B cell (primary cell): ENCODE measurements at regions of chr7 and their contacts with region 1.

Region 1: GRCh38 chr7:30074422-30075030 is 46.3 kb downstream of the PLEKHA8 start:
- DNase-seq: peak; percentile 34
- ATAC-seq: no peak
- H3K4me3 ChIP-seq: no peak overlapping the region
- H3K4me3 Mint-ChIP-seq: no peak overlapping the region
- H3K27ac ChIP-seq: no peak overlapping the region
- H3K27ac Mint-ChIP-seq: no peak overlapping the region
- H3K4me1 ChIP-seq: no peaks in the 10 kb centered on the region
- H3K4me1 Mint-ChIP-seq: no peaks in the 10 kb centered on the region
- H3K27me3 ChIP-seq: no peaks in the 10 kb centered on the region
- H3K27me3 Mint-ChIP-seq: no peaks in the 10 kb centered on the region
- CTCF ChIP-seq: peak; percentile 64

Region 2: DNA sequence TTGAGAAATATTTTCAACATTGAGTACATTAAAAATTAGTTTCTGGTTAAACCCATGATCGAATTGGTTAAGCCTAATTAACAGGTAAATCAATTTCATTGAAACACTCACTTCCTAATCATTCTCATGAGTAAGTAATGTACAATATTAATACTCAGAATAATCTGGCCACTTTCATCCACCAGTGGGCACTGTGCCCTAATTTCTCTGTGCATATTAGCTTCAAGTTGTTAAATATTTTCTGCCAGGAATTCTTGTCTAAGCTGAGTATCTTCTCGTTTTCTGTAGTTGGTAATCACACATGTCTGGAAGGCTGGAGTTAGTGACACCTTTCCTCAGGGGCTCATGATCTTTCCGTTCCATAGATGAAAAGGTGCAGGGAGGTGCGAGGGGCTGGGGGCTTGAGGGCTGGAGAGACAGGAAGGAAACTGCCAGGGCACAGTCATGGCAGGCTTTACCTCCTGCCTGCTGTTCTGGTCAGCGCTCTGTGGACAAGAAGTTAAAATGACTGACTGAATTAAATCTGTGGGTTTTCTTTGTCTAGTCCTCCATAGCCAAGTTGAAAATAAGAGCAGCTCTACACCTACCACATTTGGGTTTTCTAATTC is 196.3 kb before region 1 on chr7:
- CTCF ChIA-PET with region 1: interaction called, 19 read pairs
- POLR2A ChIA-PET with region 1: no interaction called
- intact Hi-C with region 1: loop called (anchors 1 kb)
- DNase-seq: peak; percentile 59
- ATAC-seq: no peak
- H3K4me3 ChIP-seq: no peak overlapping the region
- H3K4me3 Mint-ChIP-seq: no peak overlapping the region
- H3K27ac ChIP-seq: no peak overlapping the region
- H3K27ac Mint-ChIP-seq: no peak overlapping the region
- H3K4me1 ChIP-seq: peaks cover 0 to under 1% of the 10 kb centered on the region in 2 donors
- H3K4me1 Mint-ChIP-seq: peaks cover 3% of the 10 kb centered on the region
- H3K27me3 ChIP-seq: peaks cover 0 to 3% (median 1%) of the 10 kb centered on the region in 4 experiments
- H3K27me3 Mint-ChIP-seq: peaks cover 25% of the 10 kb centered on the region
- CTCF ChIP-seq: peak; percentile 77